K562 (cell line): ENCODE measurements at regions of chr15 and their contacts with region 1.

Region 1: DNA sequence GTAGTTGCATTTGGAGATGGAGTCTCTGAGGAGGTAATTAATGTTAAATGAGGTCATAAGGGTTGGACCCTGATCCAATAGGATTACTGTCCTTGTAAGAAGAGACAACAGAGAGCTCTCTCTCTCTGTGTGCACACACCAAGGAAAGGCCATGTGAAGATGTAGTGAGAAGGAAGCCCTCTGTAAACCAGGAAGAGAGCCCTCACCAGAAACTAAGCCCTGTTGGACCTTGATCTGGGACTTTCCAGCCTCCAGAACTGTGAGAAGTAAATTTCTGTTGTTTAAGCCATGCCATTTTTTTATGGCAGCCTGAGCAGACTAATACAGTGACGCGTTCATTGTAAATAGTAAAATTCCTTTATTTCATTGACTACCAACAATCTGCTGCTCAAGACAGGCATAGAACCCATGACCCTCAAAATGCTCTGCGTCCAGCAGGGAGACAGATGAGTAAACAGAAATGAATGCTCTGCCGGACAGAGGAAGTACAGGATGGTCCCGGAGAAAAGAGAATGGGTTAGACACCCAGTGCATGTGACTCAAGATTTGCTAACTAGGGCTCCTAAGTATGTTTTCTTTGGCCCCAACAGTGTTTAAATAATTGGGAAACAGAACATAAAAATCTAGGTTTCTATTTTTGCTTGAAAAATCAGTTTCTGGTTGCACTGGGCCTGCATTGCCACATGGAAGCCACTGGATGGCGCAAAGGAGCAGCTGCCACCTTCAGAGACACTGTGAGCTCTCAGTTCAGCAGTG is 37.9 kb upstream of the TNFAIP8L3 start:
- DNase-seq: peak; percentile 51 to 56 (median 53)
- ATAC-seq: peak; percentile 85
- H3K4me3 ChIP-seq: no peak overlapping the region
- H3K27ac ChIP-seq: no peak overlapping the region
- H3K4me1 ChIP-seq: peaks cover 0 to 3% of the 10 kb centered on the region in 2 experiments; a peak in 1 of 5 replicates
- H3K27me3 ChIP-seq: peaks cover 0 to 13% of the 10 kb centered on the region in 2 experiments; a peak in 2 of 5 replicates
- CTCF ChIP-seq: peak; percentile 83 to 92 (median 91)
- EP300 ChIP-seq: no peak
- POLR2A ChIP-seq: no peak
- RAD21 ChIP-seq: peak; percentile 59 to 73

Region 2: GRCh38 chr15:51192521-51193280 is 60.1 kb after region 1 on chr15:
- CTCF ChIA-PET with region 1: interaction called, 14 read pairs
- POLR2A ChIA-PET with region 1: no interaction called
- in situ Hi-C with region 1: no loop called
- intact Hi-C with region 1: loop called (anchors 1 kb)
- DNase-seq: peak; percentile 76 to 86 (median 78)
- ATAC-seq: peak; percentile 98
- H3K4me3 ChIP-seq: no peak overlapping the region
- H3K27ac ChIP-seq: no peak overlapping the region
- H3K4me1 ChIP-seq: no peaks in the 10 kb centered on the region
- H3K27me3 ChIP-seq: peaks cover 18 to 33% of the 10 kb centered on the region in 2 experiments; a peak in 4 of 5 replicates
- CTCF ChIP-seq: peak; percentile 88 to 92 (median 92)
- EP300 ChIP-seq: no peak
- POLR2A ChIP-seq: no peak
- RAD21 ChIP-seq: peak; percentile 75 to 90